ENCODE measurements at regions of chr2 and their contacts with region 1.

Region 1: GRCh38 chr2:1653956-1654695 is 90.2 kb downstream of the PXDN start:
- DNase-seq: no peak
- H3K4me3 ChIP-seq: no peak overlapping the region
- H3K27ac ChIP-seq: peak overlapping the region; percentile 11 to 43
- H3K4me1 ChIP-seq: no peaks in the 10 kb centered on the region
- H3K27me3 ChIP-seq: no peaks in the 10 kb centered on the region
- CTCF ChIP-seq: no peak
- POLR2A ChIP-seq: no peak

Region 2: GRCh38 chr2:1823187-1824169 is 169.4 kb after region 1 on chr2:
- intact Hi-C with region 1: loop called (anchors 5 kb)
- DNase-seq: no peak
- H3K4me3 ChIP-seq: no peak overlapping the region
- H3K27ac ChIP-seq: peak overlapping the region in 1 of 2 donors; percentile 26
- H3K4me1 ChIP-seq: no peaks in the 10 kb centered on the region
- H3K27me3 ChIP-seq: no peaks in the 10 kb centered on the region
- CTCF ChIP-seq: no peak
- POLR2A ChIP-seq: no peak

Region 3: DNA sequence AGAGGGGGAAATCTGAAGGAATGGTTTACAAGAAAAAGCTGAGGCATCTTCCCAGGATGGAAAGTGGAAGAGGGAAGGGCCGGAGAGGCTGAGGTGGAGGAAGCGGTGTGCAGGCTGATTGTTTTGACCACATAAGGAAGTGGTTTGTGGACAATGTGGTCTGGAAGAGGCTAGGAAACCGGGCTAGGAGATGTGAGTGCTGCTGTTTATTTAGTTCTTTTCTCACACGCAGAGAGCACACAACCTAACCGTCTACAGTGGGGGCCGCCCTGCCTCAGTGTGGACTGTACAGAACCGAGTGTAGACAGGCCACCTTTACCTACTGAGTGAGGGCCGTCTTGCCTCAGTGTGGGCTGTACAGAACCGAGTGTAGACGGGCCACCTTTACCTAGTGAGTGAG is 341.9 kb after region 1 on chr2:
- intact Hi-C with region 1: no loop called
- DNase-seq: no peak
- H3K4me3 ChIP-seq: no peak overlapping the region
- H3K27ac ChIP-seq: no peak overlapping the region
- H3K4me1 ChIP-seq: no peaks in the 10 kb centered on the region
- H3K27me3 ChIP-seq: no peaks in the 10 kb centered on the region
- CTCF ChIP-seq: no peak
- POLR2A ChIP-seq: no peak

Measured in prostate gland (tissue), 2 donors.